ENCODE measurements at regions of chr17 and their contacts with region 1.

Region 1: DNA sequence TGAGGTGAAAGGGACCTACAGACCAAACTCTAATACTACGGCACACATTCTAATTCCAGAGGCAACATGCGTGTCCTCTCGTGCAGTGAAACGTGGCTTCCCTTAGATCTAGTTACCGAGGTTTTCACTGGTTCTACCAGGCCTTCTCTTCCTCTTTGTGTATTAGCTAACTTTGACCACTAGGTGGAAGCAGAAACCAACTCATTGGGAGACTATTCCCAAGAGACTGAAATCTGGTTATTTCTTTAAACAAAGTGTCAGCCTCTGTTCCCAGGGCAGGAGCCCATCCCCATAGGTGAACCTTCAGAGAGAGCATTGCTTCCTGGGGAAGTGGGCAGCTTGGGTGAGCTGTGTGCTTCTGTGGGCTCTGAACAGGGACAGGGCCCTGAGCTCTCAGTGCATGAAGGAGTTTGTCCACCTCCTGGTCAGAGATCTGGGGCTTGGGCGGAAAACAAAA is 19.7 kb upstream of the RCVRN start:
- DNase-seq: peak; percentile 33 to 50
- H3K4me3 ChIP-seq: no peak overlapping the region
- H3K4me3 Mint-ChIP-seq: no peak overlapping the region
- H3K27ac Mint-ChIP-seq: no peak overlapping the region
- H3K4me1 ChIP-seq: no peaks in the 10 kb centered on the region
- H3K4me1 Mint-ChIP-seq: no peaks in the 10 kb centered on the region
- H3K27me3 ChIP-seq: no peaks in the 10 kb centered on the region
- H3K27me3 Mint-ChIP-seq: no peaks in the 10 kb centered on the region
- CTCF ChIP-seq: peak; percentile 43 to 49

Region 2: GRCh38 chr17:9948928-9949327 is 24.2 kb after region 1 on chr17:
- CTCF ChIA-PET with region 1: no interaction called
- POLR2A ChIA-PET with region 1: no interaction called
- intact Hi-C with region 1: no loop called
- DNase-seq: no peak
- H3K4me3 ChIP-seq: no peak overlapping the region
- H3K4me3 Mint-ChIP-seq: no peak overlapping the region
- H3K27ac Mint-ChIP-seq: no peak overlapping the region
- H3K4me1 ChIP-seq: no peaks in the 10 kb centered on the region
- H3K4me1 Mint-ChIP-seq: no peaks in the 10 kb centered on the region
- H3K27me3 ChIP-seq: no peaks in the 10 kb centered on the region
- H3K27me3 Mint-ChIP-seq: peaks cover 2% of the 10 kb centered on the region
- CTCF ChIP-seq: no peak

Region 3: GRCh38 chr17:9959377-9959981 is 34.7 kb after region 1 on chr17:
- CTCF ChIA-PET with region 1: interaction called, 5 read pairs
- POLR2A ChIA-PET with region 1: no interaction called
- intact Hi-C with region 1: loop called (anchors 1 kb)
- DNase-seq: peak in 1 of 2 experiments; percentile 44
- H3K4me3 ChIP-seq: no peak overlapping the region
- H3K4me3 Mint-ChIP-seq: no peak overlapping the region
- H3K27ac Mint-ChIP-seq: no peak overlapping the region
- H3K4me1 ChIP-seq: no peaks in the 10 kb centered on the region
- H3K4me1 Mint-ChIP-seq: no peaks in the 10 kb centered on the region
- H3K27me3 ChIP-seq: no peaks in the 10 kb centered on the region
- H3K27me3 Mint-ChIP-seq: peaks cover 2% of the 10 kb centered on the region
- CTCF ChIP-seq: peak; percentile 30 to 37

Region 4: DNA sequence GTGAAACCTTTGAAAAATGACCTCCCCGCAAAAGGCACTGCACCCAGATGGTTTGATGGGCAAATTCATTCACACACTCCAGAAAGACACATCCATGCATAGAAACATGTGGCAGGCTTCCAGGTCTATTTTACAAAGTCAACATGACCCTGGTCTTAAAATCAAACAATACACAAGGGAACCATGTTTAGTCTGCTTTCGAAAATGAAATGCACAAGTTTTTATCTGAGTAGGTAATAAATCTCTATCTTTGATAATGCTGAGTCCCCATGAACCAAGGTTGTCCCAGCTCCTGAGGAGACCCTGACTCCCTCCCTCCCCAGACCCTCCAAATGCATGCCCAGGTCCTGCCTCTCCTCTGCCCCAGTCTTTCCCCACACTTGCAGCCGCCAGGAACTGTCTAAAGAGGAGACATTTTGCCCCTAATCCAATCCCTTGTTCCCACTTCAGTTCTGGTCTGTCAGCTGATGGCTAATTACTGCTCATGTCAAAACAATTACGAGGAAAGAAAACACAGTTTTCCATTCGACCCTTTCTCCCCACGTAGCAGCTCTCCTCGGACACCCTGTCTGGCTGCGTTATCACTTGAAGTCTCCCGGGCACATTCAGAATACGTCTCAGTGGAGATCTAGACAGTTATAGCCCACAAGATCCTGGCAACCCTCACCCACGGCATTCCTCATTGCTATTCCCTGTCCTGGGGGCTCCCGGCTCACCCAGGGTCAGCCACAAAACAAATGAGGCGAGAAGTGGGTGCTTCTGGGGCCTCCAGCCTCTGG is 49.1 kb after region 1 on chr17:
- CTCF ChIA-PET with region 1: no interaction called
- POLR2A ChIA-PET with region 1: no interaction called
- intact Hi-C with region 1: no loop called
- DNase-seq: no peak
- H3K4me3 ChIP-seq: no peak overlapping the region
- H3K4me3 Mint-ChIP-seq: no peak overlapping the region
- H3K27ac Mint-ChIP-seq: no peak overlapping the region
- H3K4me1 ChIP-seq: no peaks in the 10 kb centered on the region
- H3K4me1 Mint-ChIP-seq: no peaks in the 10 kb centered on the region
- H3K27me3 ChIP-seq: no peaks in the 10 kb centered on the region
- H3K27me3 Mint-ChIP-seq: peaks cover 3% of the 10 kb centered on the region
- CTCF ChIP-seq: no peak

Region 5: GRCh38 chr17:10618202-10618635 is 693.5 kb after region 1 on chr17:
- CTCF ChIA-PET with region 1: no interaction called
- POLR2A ChIA-PET with region 1: no interaction called
- intact Hi-C with region 1: loop called (anchors 10 kb)
- DNase-seq: peak; percentile 54 to 61
- H3K4me3 ChIP-seq: no peak overlapping the region
- H3K4me3 Mint-ChIP-seq: no peak overlapping the region
- H3K27ac Mint-ChIP-seq: no peak overlapping the region
- H3K4me1 ChIP-seq: no peaks in the 10 kb centered on the region
- H3K4me1 Mint-ChIP-seq: peaks cover 7% of the 10 kb centered on the region
- H3K27me3 ChIP-seq: no peaks in the 10 kb centered on the region
- H3K27me3 Mint-ChIP-seq: no peaks in the 10 kb centered on the region
- CTCF ChIP-seq: peak; percentile 69 to 72

Measured in Caco-2 (cell line).